Mammary epithelial cell (primary cell): ENCODE measurements at regions of chr22 and their contacts with region 1.

Region 1: DNA sequence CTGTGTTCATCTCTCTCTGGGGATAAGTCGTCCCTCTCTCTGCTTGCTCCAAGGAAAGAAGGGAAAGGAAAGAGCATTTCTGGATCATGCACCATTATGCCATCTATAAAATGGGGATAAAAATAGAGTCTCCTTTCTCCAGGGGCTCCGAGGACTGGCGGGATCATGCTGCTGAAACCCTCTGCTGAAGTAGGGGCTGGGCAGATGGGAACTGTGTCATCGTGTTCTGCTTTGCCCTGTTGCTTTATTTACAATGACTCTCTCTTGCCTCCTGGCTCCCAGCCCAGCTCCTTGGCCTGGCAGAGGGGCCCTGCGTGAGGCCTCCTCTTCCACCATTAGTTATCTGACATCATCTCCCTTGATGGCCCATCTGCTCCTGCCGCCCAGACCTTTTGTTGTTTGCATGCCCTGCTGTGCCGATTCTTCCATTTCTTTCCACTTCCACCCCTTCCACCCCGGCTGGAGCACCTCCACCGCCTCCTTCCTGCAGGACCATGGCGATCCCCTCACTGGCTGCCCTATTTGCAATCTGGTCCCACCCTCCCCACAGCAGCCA is 200.9 kb downstream of the MYO18B start:
- DNase-seq: no peak
- H3K4me3 ChIP-seq: no peak overlapping the region
- H3K27ac ChIP-seq: no peak overlapping the region
- H3K4me1 ChIP-seq: no peaks in the 10 kb centered on the region
- H3K27me3 ChIP-seq: no peaks in the 10 kb centered on the region
- CTCF ChIP-seq: no peak

Region 2: DNA sequence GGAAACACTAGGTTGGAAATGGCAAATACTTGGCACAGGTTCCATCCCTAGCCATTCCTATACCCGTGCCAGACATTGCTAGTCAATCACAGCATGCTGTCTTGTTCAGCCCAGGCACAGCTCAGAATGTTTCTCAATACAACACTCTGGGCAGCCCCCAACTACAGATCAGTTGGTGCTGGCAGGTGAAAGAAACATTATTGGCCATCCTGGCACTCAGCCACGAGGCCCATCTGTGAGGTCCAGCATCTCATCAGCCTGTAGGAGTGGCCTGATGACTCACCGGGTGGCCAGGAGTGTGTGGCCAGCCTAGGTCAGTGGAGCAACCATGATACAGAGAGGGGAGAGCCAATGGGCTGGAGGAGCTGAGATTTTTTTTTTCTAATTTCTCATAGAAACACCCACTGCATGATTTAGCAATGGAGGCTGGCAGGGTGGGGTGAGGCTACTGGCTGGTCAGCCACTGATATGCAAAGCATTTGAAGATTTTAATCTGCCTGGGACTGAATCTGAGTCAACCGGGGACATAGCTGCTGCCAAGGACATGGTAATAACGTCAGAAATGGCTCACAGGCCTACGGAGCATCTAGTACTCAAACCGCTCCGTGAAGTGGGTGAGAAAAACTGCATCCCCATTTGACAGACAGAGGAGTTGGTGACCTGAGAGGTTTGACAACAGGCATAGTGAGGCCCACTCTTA is 195.5 kb before region 1 on chr22:
- CTCF ChIA-PET with region 1: no interaction called
- dilution Hi-C with region 1: no loop called
- in situ Hi-C with region 1: no loop called
- intact Hi-C with region 1: no loop called
- DNase-seq: peak; percentile 93
- H3K4me3 ChIP-seq: no peak overlapping the region
- H3K27ac ChIP-seq: no peak overlapping the region
- H3K4me1 ChIP-seq: peaks cover 10% of the 10 kb centered on the region
- H3K27me3 ChIP-seq: no peaks in the 10 kb centered on the region
- CTCF ChIP-seq: no peak

Region 3: GRCh38 chr22:25888399-25889054 is 54.4 kb before region 1 on chr22:
- CTCF ChIA-PET with region 1: no interaction called
- dilution Hi-C with region 1: no loop called
- in situ Hi-C with region 1: no loop called
- intact Hi-C with region 1: no loop called
- DNase-seq: no peak
- H3K4me3 ChIP-seq: no peak overlapping the region
- H3K27ac ChIP-seq: no peak overlapping the region
- H3K4me1 ChIP-seq: no peaks in the 10 kb centered on the region
- H3K27me3 ChIP-seq: no peaks in the 10 kb centered on the region
- CTCF ChIP-seq: no peak

Region 4: DNA sequence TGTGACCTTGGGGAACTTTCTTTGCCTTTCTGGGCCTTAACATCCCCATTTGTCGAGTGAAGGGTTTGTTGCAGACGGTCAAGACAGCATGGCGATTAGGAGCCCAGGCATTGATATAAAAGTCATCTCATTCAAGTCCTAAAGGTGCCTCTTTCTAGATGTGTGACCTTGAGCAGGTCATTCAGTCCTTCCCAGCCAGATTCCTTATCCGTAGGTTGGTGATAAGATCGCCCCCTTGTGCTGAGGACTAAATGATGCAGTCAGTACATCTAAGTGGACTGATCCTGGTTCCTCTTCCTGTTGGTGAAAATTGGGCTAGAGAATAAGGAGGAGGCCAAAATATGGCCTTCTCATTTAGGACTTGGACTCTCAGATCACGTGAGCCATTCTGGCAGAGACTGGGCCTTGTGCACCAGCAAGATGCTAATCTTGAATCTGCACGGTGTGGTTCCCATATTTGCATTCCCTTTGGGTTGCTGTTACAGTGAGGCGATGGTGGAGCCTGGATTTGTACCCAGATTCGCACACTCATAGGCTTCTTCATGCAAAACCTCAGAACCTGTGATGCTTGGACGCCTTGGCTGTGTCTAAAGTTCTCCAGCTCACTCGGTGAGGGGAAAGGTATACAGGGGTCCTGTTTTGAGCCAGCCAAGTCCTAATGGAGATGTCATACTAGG is 44.1 kb before region 1 on chr22:
- CTCF ChIA-PET with region 1: no interaction called
- dilution Hi-C with region 1: loop called (anchors 5 kb)
- in situ Hi-C with region 1: no loop called
- intact Hi-C with region 1: no loop called
- DNase-seq: no peak
- H3K4me3 ChIP-seq: no peak overlapping the region
- H3K27ac ChIP-seq: no peak overlapping the region
- H3K4me1 ChIP-seq: no peaks in the 10 kb centered on the region
- H3K27me3 ChIP-seq: no peaks in the 10 kb centered on the region
- CTCF ChIP-seq: peak; percentile 20 to 29

Region 5: GRCh38 chr22:25970374-25970911 is 27.5 kb after region 1 on chr22:
- CTCF ChIA-PET with region 1: no interaction called
- dilution Hi-C with region 1: no loop called
- in situ Hi-C with region 1: no loop called
- intact Hi-C with region 1: no loop called
- DNase-seq: no peak
- H3K4me3 ChIP-seq: no peak overlapping the region
- H3K27ac ChIP-seq: no peak overlapping the region
- H3K4me1 ChIP-seq: no peaks in the 10 kb centered on the region
- H3K27me3 ChIP-seq: no peaks in the 10 kb centered on the region
- CTCF ChIP-seq: no peak